ENCODE measurements at regions of chr16 and their contacts with region 1.

Region 1: DNA sequence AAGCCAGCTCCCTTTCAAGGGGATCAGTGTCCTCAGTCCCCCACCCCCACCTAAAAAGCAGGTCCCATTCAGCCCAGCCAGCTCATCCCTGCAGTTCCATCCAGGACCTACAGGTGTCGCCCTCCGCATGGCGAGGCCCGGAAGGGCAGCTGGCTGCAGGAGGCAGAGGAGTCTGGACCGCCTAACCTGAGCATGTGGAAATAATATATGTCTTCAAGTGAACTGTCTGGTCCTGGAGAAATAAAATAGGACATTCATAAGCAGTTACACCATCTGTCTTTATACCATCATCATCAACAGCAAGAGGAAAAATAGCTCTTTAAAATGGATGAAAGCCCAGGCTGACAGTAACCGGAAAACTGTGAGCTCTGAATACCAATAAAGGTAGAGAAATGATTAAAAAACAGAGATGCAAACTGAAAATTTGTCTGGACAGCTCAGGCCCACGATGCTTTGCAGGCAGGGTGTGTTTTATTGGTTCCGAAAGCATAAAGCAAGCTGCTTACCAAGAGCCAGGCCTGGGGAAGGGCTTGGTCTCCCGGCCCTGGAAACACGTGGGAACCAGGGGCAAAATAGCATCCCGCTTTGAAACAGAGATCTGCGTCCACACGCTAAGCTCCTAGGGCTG is 215.2 kb downstream of the ZFHX3 start:
- DNase-seq: peak; percentile 55
- H3K4me3 ChIP-seq: no peak overlapping the region
- H3K27ac ChIP-seq: no peak overlapping the region
- H3K4me1 ChIP-seq: peaks cover 8% of the 10 kb centered on the region
- CTCF ChIP-seq: peak; percentile 97

Region 2: GRCh38 chr16:72410492-72410891 is 422.2 kb before region 1 on chr16:
- CTCF ChIA-PET with region 1: no interaction called
- POLR2A ChIA-PET with region 1: no interaction called
- intact Hi-C with region 1: loop called (anchors 10 kb)
- DNase-seq: no peak
- H3K4me3 ChIP-seq: no peak overlapping the region
- H3K27ac ChIP-seq: no peak overlapping the region
- H3K4me1 ChIP-seq: no peaks in the 10 kb centered on the region
- CTCF ChIP-seq: no peak

Region 3: DNA sequence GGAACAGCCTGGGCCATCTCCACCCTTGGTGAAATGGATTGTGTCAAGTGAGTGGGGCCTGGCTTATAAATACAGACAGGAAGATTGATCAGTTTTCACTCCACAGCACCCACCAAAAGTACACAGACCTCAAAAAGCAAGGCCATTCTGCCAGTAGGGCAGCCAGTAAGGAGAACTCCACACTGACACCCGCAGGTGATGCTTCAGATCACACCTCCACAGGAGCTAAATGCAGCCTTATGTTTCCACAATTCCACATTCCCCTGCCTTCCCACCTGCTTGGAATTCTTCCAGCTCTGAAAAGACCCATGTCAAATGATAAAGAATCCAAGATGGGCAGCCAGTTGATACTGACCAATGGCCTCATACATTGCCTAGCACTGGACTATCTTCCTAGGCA is 24.1 kb after region 1 on chr16:
- CTCF ChIA-PET with region 1: no interaction called
- POLR2A ChIA-PET with region 1: no interaction called
- intact Hi-C with region 1: no loop called
- DNase-seq: no peak
- H3K4me3 ChIP-seq: no peak overlapping the region
- H3K27ac ChIP-seq: no peak overlapping the region
- H3K4me1 ChIP-seq: no peaks in the 10 kb centered on the region
- CTCF ChIP-seq: peak; percentile 53

Region 4: DNA sequence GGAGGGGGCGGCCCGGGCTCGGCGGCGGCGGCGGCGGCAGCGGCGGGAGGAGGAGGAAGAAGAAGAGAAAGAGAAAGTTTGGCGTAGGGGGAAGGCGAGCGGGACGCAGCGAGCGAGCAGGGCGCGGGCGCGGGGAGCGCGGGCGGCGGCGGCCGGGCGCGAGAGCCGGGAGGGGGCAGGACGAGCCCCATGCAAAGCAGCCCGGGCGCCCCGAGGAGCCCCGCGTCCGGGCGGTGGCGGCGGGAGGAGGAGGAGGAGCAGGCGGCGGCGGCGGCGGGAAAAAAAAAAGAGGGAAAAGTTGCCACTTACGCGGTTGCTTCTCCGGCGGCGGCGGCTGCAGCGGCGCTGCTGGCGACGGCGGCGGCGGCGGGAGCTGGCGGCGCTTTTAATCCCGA is 225.5 kb after region 1 on chr16:
- CTCF ChIA-PET with region 1: interaction called, 4 read pairs
- POLR2A ChIA-PET with region 1: no interaction called
- intact Hi-C with region 1: loop called (anchors 10 kb)
- DNase-seq: peak; percentile 72
- H3K4me3 ChIP-seq: peak overlapping the region; percentile 85
- H3K27ac ChIP-seq: peak overlapping the region; percentile 40
- H3K4me1 ChIP-seq: peaks cover 51% of the 10 kb centered on the region
- CTCF ChIP-seq: no peak

Region 5: DNA sequence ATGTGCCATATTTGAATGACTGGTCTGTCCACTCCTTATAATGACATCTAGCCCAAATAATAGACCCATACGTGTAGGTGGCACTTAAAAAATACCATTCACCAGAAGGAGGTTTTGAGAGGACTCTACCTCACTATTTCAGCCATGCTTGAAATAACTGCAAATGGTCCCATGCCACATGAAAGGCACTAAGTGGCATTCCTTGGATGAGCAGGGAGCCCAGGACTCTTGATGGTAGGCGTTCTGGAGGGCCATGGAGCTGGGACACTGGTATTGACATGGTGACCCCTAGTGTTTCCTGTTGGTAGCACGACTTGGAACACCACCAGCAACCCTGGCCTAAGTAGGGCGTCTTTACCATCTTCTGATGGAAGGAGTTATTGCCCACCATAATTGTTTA is 363.9 kb after region 1 on chr16:
- CTCF ChIA-PET with region 1: no interaction called
- POLR2A ChIA-PET with region 1: no interaction called
- intact Hi-C with region 1: loop called (anchors 5 kb)
- DNase-seq: peak; percentile 31
- H3K4me3 ChIP-seq: no peak overlapping the region
- H3K27ac ChIP-seq: no peak overlapping the region
- H3K4me1 ChIP-seq: no peaks in the 10 kb centered on the region
- CTCF ChIP-seq: peak; percentile 80

Measured in OCI-LY7 (cell line).